CD4-positive, alpha-beta memory T cell (primary cell): ENCODE measurements at regions of chr10 and their contacts with region 1.

Region 1: DNA sequence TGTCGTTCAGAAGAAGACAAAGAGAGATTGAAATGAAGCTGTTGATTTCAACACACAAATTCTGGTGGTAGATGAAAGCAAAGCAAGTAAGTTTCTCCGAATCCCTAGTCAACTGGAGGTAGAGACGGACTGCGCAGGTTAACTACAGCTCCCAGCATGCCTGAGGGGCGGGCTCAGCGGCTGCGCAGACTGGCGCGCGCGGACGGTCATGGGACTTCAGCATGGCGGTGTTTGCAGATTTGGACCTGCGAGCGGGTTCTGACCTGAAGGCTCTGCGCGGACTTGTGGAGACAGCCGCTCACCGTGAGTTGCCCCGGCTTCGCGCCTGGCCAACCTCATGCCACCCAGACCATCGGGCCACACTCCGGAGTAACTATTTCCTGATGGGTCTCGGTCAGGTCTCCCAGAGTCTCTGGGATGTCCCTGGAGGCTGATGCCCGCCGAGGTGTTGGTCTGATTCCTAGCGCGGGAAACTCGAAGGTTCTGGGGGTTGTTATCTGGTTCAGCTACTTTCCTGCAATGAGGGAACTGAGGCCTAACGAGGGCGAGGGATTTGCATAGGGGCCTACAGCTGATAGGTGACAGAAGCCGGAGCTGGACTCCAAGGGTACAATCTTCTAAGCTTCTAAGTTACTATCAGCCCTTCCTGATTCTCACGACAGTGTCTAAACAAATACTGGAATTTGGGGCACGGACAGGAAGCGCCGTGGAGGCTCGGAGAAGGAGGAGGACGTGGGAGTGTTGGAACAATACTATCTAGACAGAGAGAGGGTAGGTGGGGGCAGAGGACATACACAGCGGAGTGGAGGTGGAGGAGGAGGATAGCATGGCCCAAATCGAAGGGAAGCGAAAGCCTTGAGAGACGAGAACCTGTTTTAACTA is at the start of gene RPP30:
- DNase-seq: peak; percentile 78 to 81 (median 79)
- H3K4me3 ChIP-seq: peak within 1 kb of the TSS; percentile 80 to 91
- H3K4me3 Mint-ChIP-seq: peak within 1 kb of the TSS; percentile 97 to 100 (median 98)
- H3K27ac ChIP-seq: peak within 1 kb of the TSS; percentile 65
- H3K27ac Mint-ChIP-seq: peak within 1 kb of the TSS; percentile 81 to 96 (median 95)
- H3K4me1 ChIP-seq: peaks cover 30% of the 10 kb centered on the region
- H3K4me1 Mint-ChIP-seq: peaks cover 21 to 41% (median 32%) of the 10 kb centered on the region in 4 donors
- H3K27me3 ChIP-seq: no peaks in the 10 kb centered on the region
- H3K27me3 Mint-ChIP-seq: peaks cover 13 to 18% of the 10 kb centered on the region in 2 donors
- total RNA-seq, gene RPP30: 32.3 to 33.2 TPM

Region 2: GRCh38 chr10:89701238-89702120 is 1170.5 kb before region 1 on chr10 and contains the start of gene KIF20B:
- CTCF ChIA-PET with region 1: no interaction called
- POLR2A ChIA-PET with region 1: interaction called, 4 read pairs
- intact Hi-C with region 1: loop called (anchors 5 kb)
- DNase-seq: peak; percentile 95 to 97 (median 96)
- H3K4me3 ChIP-seq: peak within 1 kb of the TSS; percentile 74 to 99
- H3K4me3 Mint-ChIP-seq: peak within 1 kb of the TSS; percentile 97 to 99 (median 99)
- H3K27ac ChIP-seq: peak within 1 kb of the TSS; percentile 75
- H3K27ac Mint-ChIP-seq: peak within 1 kb of the TSS; percentile 97 to 99 (median 99)
- H3K4me1 ChIP-seq: peaks cover 35% of the 10 kb centered on the region
- H3K4me1 Mint-ChIP-seq: peaks cover 21 to 53% (median 33%) of the 10 kb centered on the region in 4 donors
- H3K27me3 ChIP-seq: no peaks in the 10 kb centered on the region
- H3K27me3 Mint-ChIP-seq: no peaks in the 10 kb centered on the region
- total RNA-seq, gene KIF20B: 20.7 to 21.4 TPM

Region 3: DNA sequence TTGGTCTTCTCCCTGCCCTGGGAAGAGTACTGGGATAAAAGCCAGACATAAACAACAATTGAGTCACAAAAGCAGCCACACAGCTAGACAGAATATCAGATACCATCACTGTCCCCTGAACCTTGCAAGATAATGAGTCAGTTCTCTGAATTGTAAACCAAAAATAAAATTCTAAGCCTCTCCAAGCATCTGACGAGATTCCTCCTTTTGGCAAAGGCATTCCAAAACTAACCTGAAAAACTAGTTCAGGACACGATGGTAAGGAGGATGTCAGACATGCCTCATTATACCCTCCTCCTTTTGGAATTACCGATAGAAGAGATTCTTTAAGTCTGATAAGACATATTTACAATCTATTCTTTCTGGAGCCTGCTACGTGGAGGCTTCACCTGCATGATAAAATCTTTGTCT is 464.8 kb before region 1 on chr10:
- CTCF ChIA-PET with region 1: no interaction called
- POLR2A ChIA-PET with region 1: no interaction called
- intact Hi-C with region 1: no loop called
- DNase-seq: no peak
- H3K4me3 ChIP-seq: no peak overlapping the region
- H3K4me3 Mint-ChIP-seq: no peak overlapping the region
- H3K27ac ChIP-seq: no peak overlapping the region
- H3K27ac Mint-ChIP-seq: no peak overlapping the region
- H3K4me1 ChIP-seq: no peaks in the 10 kb centered on the region
- H3K4me1 Mint-ChIP-seq: no peaks in the 10 kb centered on the region
- H3K27me3 ChIP-seq: no peaks in the 10 kb centered on the region
- H3K27me3 Mint-ChIP-seq: no peaks in the 10 kb centered on the region

Region 4: GRCh38 chr10:90751107-90751997 is 120.7 kb before region 1 on chr10:
- CTCF ChIA-PET with region 1: no interaction called
- POLR2A ChIA-PET with region 1: no interaction called
- intact Hi-C with region 1: loop called (anchors 1 kb)
- DNase-seq: peak; percentile 16 to 45 (median 29)
- H3K4me3 ChIP-seq: no peak overlapping the region
- H3K4me3 Mint-ChIP-seq: no peak overlapping the region
- H3K27ac ChIP-seq: no peak overlapping the region
- H3K27ac Mint-ChIP-seq: no peak overlapping the region
- H3K4me1 ChIP-seq: no peaks in the 10 kb centered on the region
- H3K4me1 Mint-ChIP-seq: no peaks in the 10 kb centered on the region
- H3K27me3 ChIP-seq: no peaks in the 10 kb centered on the region
- H3K27me3 Mint-ChIP-seq: peaks cover 14% of the 10 kb centered on the region in 2 donors

Region 5: DNA sequence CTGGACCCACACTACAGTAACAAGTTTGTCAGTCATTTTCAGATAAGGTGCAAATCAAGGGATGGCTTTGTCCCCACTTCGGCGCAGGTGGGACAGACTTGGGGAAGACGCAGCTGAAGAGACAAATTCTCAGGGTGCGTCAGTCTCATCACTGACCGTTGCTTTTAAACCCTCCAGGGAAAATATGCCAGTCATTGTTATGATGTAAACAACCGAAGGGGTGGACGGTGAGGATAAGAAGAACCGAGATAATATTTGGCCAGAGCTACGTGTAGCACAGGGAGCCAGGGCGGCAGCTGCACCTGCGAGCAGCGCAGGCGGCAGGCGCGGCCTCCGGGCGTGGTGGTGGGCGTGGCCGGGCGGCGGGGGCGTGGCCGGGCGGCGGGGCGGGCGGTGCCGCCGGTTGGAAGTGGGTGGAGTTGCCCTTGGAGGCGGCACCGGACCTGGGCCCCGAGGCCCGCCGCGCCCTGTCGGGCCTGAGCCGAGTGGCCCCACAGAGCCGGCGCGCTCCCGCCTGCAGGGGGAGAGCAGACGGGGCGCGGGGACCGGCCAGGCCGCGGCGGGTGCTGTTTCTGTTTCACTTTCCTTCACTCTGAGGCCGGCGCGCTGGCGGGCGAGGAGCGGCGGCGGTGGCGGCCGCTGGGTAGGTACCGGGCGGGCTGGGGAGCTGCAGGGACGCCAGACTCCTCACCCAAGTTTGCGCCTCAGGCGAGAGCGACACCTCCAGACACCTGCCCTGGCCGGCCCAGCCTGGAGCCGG is 348.4 kb after region 1 on chr10 and contains the start of gene PCGF5:
- CTCF ChIA-PET with region 1: no interaction called
- POLR2A ChIA-PET with region 1: no interaction called
- intact Hi-C with region 1: loop called (anchors 1 kb)
- DNase-seq: peak; percentile 90 to 93 (median 93)
- H3K4me3 ChIP-seq: peak within 1 kb of the TSS; percentile 25 to 65
- H3K4me3 Mint-ChIP-seq: peak within 1 kb of the TSS; percentile 86 to 93 (median 90)
- H3K27ac ChIP-seq: peak within 1 kb of the TSS; percentile 85
- H3K27ac Mint-ChIP-seq: peak within 1 kb of the TSS; percentile 89 to 95 (median 94)
- H3K4me1 ChIP-seq: peaks cover 48% of the 10 kb centered on the region
- H3K4me1 Mint-ChIP-seq: peaks cover 41 to 63% (median 49%) of the 10 kb centered on the region in 4 donors
- H3K27me3 ChIP-seq: no peaks in the 10 kb centered on the region
- H3K27me3 Mint-ChIP-seq: no peaks in the 10 kb centered on the region
- total RNA-seq, gene PCGF5: 51.0 to 52.9 TPM

Region 6: GRCh38 chr10:91632671-91633550 is 760.9 kb after region 1 on chr10 and contains the start of gene PPP1R3C:
- CTCF ChIA-PET with region 1: no interaction called
- POLR2A ChIA-PET with region 1: no interaction called
- intact Hi-C with region 1: loop called (anchors 10 kb)
- DNase-seq: peak; percentile 9 to 42 (median 15)
- H3K4me3 ChIP-seq: peak within 1 kb of the TSS in 1 of 2 donors; percentile 12
- H3K4me3 Mint-ChIP-seq: peak within 1 kb of the TSS; percentile 44 to 75 (median 68)
- H3K27ac ChIP-seq: no peak within 1 kb of the TSS
- H3K27ac Mint-ChIP-seq: no peak within 1 kb of the TSS
- H3K4me1 ChIP-seq: peaks cover 4% of the 10 kb centered on the region
- H3K4me1 Mint-ChIP-seq: peaks cover 0 to 8% (median 5%) of the 10 kb centered on the region in 4 donors
- H3K27me3 ChIP-seq: peaks cover 25% of the 10 kb centered on the region
- H3K27me3 Mint-ChIP-seq: peaks cover 44 to 47% of the 10 kb centered on the region in 2 donors
- total RNA-seq, gene PPP1R3C: not detected